Head of caudate nucleus (tissue), 42 donors: ENCODE measurements at regions of chr2 and their contacts with region 1.

Region 1: GRCh38 chr2:26503231-26503880 is 25.4 kb upstream of the OTOF start:
- DNase-seq: peak; percentile 25 to 85 (median 63)

Region 2: GRCh38 chr2:26577434-26578112 is 74.2 kb after region 1 on chr2:
- intact Hi-C with region 1: loop called (anchors 10 kb)
- DNase-seq: peak; percentile 19 to 85 (median 72)